PC-3 (cell line): ENCODE measurements at regions of chr2 and their contacts with region 1.

Region 1: GRCh38 chr2:13201924-13202323 is 485.2 kb downstream of the TRIB2 start:
- DNase-seq: peak; percentile 29
- ATAC-seq: no peak
- H3K4me3 ChIP-seq: no peak overlapping the region
- H3K27ac ChIP-seq: no peak overlapping the region
- H3K4me1 ChIP-seq: no peaks in the 10 kb centered on the region
- H3K27me3 ChIP-seq: peaks cover 28% of the 10 kb centered on the region; the same call in 1 of the 2 replicates
- CTCF ChIP-seq: peak; percentile 61

Region 2: GRCh38 chr2:12479065-12479601 is 722.8 kb before region 1 on chr2:
- CTCF ChIA-PET with region 1: no interaction called
- POLR2A ChIA-PET with region 1: no interaction called
- intact Hi-C with region 1: no loop called
- DNase-seq: peak; percentile 38
- ATAC-seq: peak; percentile 66
- H3K4me3 ChIP-seq: no peak overlapping the region
- H3K27ac ChIP-seq: 0 out of 2 replicates have a peak overlapping the region, but pooled peaks have one; percentile 4
- H3K4me1 ChIP-seq: peaks cover 14% of the 10 kb centered on the region
- H3K27me3 ChIP-seq: no peaks in the 10 kb centered on the region
- CTCF ChIP-seq: no peak

Region 3: GRCh38 chr2:13335862-13336535 is 134.1 kb after region 1 on chr2:
- CTCF ChIA-PET with region 1: no interaction called
- POLR2A ChIA-PET with region 1: no interaction called
- intact Hi-C with region 1: no loop called
- DNase-seq: no peak
- ATAC-seq: no peak
- H3K4me3 ChIP-seq: no peak overlapping the region
- H3K27ac ChIP-seq: no peak overlapping the region
- H3K4me1 ChIP-seq: no peaks in the 10 kb centered on the region
- H3K27me3 ChIP-seq: no peaks in the 10 kb centered on the region
- CTCF ChIP-seq: no peak

Region 4: DNA sequence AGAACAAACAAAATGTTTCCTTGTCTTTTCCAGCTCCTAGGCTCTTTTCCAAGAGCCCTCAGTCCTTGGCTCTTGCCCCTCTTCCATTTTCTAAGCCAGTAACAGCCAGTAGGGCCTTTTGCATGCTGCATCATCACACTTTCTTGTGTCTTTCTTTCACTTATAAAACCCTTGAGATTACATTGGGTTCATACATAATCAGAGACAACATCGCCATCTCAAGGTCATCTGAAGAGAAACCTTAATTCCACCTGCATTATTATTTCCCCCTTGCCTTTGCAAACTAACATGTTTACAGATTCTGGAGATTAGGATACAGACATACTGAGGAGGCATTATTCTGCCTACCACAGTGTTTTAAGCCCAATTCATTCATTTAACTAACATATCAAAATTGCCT is 212.1 kb after region 1 on chr2:
- CTCF ChIA-PET with region 1: no interaction called
- POLR2A ChIA-PET with region 1: no interaction called
- intact Hi-C with region 1: loop called (anchors 2 kb)
- DNase-seq: no peak
- ATAC-seq: no peak
- H3K4me3 ChIP-seq: no peak overlapping the region
- H3K27ac ChIP-seq: no peak overlapping the region
- H3K4me1 ChIP-seq: no peaks in the 10 kb centered on the region
- H3K27me3 ChIP-seq: no peaks in the 10 kb centered on the region
- CTCF ChIP-seq: no peak